Activated CD8-positive, alpha-beta memory T cell treated with anti-CD3 and anti-CD28 coated beads, Interleukin-2, amount 10 ng/mL, durations not matched to agents 7 days and 5 days (primary cell): ENCODE measurements at regions of chr19 and their contacts with region 1.

Region 1: DNA sequence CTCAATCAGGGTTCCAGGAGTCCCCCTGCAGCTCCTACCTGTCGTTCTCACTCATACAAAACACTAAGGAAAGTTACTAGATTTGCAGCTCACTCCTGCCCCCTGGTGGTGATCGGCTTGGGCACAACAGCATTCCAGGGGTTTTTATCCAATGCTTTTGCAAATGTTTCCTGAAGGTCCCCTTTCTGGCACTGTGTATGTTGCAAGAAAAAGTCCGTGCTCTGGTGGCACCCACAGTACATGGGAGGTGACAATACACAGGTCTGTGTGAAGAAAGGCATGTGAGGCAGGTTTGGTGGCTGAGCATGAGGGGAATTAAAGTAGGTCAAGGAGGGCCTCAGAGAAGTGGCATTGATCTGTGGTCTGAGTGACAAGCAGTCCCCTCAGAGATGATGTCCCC is 8.6 kb upstream of the TYK2 start:
- DNase-seq: peak; percentile 85
- ATAC-seq: peak; percentile 73
- H3K4me3 Mint-ChIP-seq: no peak overlapping the region
- H3K27ac Mint-ChIP-seq: peak overlapping the region; percentile 3
- H3K4me1 Mint-ChIP-seq: peaks cover 6% of the 10 kb centered on the region
- H3K27me3 Mint-ChIP-seq: no peaks in the 10 kb centered on the region

Region 2: DNA sequence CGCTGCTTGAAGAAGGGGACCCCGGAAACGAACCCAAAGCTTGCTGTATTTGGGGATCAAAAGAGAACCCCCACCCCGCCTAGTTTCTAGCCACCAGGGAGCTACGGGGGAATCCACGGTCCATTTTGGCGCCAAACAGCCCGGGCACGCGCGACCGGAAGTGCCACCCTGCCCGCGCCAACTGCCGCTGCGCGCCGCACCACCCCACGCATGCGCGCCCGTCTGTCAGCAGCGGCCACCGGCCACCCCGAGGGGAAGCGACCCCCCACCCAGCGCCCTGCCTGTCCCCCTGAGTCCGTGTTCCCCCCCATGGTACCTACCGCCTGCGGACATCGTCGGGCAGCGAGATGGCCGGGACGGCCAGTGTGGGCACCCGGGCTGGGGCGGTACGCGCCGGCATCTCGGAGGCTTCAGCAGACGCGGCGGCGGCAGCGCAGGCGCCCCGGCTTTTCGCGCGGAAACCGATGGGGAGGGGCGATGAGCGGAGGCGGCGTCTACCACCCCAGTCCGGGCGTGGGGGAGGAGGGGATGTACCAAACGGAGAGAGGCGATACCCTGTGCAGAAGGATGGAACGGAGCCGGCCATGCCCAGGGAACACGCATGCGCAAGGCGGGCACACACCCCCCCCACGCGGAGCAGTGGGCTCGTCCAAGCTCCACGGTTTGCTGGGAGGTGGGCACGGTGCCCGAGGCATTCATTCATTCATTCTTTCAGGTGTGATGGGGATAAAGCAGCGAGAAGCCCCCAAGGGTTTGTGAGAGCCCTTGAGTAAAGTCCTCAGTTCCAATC is 194.3 kb before region 1 on chr19 and contains the start of gene DNMT1:
- CTCF ChIA-PET with region 1: interaction called, 10 read pairs
- DNase-seq: peak; percentile 99
- ATAC-seq: peak; percentile 96
- H3K4me3 Mint-ChIP-seq: peak within 1 kb of the TSS; percentile 92
- H3K27ac Mint-ChIP-seq: peak within 1 kb of the TSS; percentile 94
- H3K4me1 Mint-ChIP-seq: peaks cover 51% of the 10 kb centered on the region
- H3K27me3 Mint-ChIP-seq: no peaks in the 10 kb centered on the region
- total RNA-seq, gene DNMT1: 433 to 500 TPM

Region 3: DNA sequence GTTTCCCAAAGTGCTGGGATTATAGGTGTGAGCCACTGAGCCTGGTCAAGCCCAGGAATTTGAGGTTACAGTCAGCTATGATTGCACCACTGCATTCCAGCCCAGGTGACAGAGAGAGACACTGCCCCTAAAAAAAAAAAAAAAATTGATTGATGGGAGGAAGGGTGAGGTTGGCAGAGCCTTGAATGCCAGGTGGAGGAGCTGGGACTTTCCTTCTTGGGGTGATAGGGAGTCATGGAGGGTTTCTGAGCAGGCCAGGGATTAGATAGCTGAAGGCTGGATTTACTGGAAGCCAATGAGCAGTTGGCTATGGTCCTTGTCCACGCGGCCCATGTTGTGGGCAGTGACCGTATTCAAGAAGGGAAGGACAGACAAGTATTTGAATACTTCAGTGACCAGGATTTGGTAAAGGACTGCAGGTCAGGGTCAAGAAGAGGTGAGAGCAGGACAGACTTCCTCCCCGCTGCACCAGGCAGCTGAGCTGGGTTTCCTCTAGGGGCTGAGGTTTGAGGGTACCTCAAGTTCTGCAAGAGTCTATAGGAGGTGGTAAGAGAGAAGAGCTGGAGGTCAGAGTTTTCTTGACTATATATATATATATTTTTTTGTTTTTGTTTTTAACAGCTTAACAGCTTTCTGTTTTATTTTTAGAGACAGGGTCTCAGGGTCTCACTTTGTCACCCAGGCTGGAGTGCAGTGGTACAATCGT is 109.1 kb before region 1 on chr19:
- CTCF ChIA-PET with region 1: interaction called, 19 read pairs
- DNase-seq: peak; percentile 60
- ATAC-seq: peak; percentile 75
- H3K4me3 Mint-ChIP-seq: peak overlapping the region; percentile 40
- H3K27ac Mint-ChIP-seq: peak overlapping the region; percentile 75
- H3K4me1 Mint-ChIP-seq: peaks cover 34% of the 10 kb centered on the region
- H3K27me3 Mint-ChIP-seq: no peaks in the 10 kb centered on the region

Region 4: GRCh38 chr19:10292206-10292788 is 96.7 kb before region 1 on chr19:
- CTCF ChIA-PET with region 1: interaction called, 15 read pairs
- DNase-seq: peak; percentile 87
- ATAC-seq: peak; percentile 67
- H3K4me3 Mint-ChIP-seq: peak overlapping the region; percentile 68
- H3K27ac Mint-ChIP-seq: peak overlapping the region; percentile 24
- H3K4me1 Mint-ChIP-seq: peaks cover 64% of the 10 kb centered on the region
- H3K27me3 Mint-ChIP-seq: peaks cover 81% of the 10 kb centered on the region

Region 5: DNA sequence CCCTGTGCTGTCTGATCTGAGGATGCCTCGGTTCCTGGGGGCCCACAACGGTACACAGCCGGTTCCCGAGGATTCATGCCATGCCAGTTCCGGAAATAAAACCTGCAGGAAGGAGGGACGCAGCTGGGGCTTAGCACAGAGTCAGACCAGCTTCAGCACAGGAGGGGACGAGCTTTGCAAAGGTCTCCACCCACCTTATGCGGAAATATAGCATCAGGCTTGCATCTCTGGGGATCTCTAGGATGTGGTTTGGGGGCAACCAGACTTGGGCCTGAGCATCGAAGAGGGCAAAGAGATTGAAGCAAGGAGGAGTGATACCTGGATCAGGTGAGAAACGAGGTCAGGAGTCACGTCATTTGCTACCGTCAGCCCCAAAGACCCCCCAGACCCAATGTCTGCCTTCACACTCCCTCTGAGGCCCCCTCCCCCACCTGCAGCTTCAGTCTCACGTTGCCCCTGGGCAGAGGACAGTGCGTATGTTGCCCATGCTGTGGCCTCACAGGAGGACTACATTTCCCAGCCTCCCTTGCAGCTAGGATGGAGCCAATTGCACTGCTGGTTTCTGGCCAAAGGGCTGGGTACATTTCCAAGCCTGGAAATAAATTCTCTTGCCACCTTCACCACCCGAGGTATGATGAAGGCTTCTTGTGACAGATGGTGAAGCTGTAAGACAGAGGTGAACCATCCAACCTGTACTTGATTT is 20.7 kb before region 1 on chr19:
- CTCF ChIA-PET with region 1: interaction called, 12 read pairs
- DNase-seq: no peak
- ATAC-seq: peak; percentile 39
- H3K4me3 Mint-ChIP-seq: no peak overlapping the region
- H3K27ac Mint-ChIP-seq: no peak overlapping the region
- H3K4me1 Mint-ChIP-seq: peaks cover 18% of the 10 kb centered on the region
- H3K27me3 Mint-ChIP-seq: no peaks in the 10 kb centered on the region

Region 6: GRCh38 chr19:10403137-10404021 is 14.4 kb after region 1 on chr19 and contains the start of gene CDC37:
- CTCF ChIA-PET with region 1: interaction called, 33 read pairs
- DNase-seq: peak; percentile 98
- ATAC-seq: peak; percentile 71
- H3K4me3 Mint-ChIP-seq: peak within 1 kb of the TSS; percentile 97
- H3K27ac Mint-ChIP-seq: peak within 1 kb of the TSS; percentile 93
- H3K4me1 Mint-ChIP-seq: peaks cover 60% of the 10 kb centered on the region
- H3K27me3 Mint-ChIP-seq: no peaks in the 10 kb centered on the region
- total RNA-seq, gene CDC37: 283 to 309 TPM

Region 7: DNA sequence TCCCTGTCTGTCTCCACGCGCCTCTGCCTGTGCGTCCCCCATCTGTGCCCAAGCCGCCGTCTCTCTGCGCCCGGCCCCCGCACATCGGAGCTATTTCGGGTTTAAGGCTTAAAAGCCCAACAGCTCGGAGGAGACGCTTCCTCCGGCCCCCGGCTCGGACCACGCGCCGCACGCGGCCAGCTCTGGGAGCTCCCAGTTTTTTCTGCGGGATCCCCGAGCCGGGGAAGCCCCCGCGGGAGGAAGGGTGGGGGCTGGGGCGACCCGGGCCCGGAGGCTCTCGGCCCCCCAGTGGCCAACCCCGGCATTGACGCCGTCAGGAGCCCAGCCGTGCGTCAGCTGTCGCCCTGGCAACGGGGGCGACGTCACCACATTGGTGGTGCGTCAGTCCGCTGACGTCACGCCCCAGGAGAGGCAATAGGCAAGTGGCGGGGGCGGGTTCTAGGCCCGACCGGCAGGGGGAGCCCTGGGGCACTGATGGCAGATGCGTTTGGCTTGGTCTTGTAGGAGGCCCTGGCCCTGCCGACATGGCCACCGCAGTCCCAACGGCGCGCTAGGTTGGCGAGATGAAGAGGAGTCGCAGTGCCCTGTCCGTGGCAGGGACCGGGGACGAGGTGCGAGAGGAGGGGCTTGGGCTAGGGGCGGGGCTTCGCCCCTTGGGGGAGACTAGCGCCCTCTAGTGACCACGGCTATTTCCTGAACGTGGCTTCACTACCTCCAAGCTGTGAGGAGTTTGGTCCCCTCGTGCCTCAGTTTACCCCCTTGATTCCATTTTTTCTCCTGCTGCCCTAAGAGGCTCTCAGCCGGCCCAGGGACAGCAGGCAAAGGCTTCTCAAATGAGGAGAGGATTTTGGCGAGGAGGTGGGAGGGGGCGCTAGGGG is 27.7 kb after region 1 on chr19:
- CTCF ChIA-PET with region 1: interaction called, 13 read pairs
- DNase-seq: peak; percentile 98
- ATAC-seq: peak; percentile 48
- H3K4me3 Mint-ChIP-seq: peak overlapping the region; percentile 76
- H3K27ac Mint-ChIP-seq: peak overlapping the region; percentile 95
- H3K4me1 Mint-ChIP-seq: peaks cover 61% of the 10 kb centered on the region
- H3K27me3 Mint-ChIP-seq: peaks cover 4% of the 10 kb centered on the region

Region 8: DNA sequence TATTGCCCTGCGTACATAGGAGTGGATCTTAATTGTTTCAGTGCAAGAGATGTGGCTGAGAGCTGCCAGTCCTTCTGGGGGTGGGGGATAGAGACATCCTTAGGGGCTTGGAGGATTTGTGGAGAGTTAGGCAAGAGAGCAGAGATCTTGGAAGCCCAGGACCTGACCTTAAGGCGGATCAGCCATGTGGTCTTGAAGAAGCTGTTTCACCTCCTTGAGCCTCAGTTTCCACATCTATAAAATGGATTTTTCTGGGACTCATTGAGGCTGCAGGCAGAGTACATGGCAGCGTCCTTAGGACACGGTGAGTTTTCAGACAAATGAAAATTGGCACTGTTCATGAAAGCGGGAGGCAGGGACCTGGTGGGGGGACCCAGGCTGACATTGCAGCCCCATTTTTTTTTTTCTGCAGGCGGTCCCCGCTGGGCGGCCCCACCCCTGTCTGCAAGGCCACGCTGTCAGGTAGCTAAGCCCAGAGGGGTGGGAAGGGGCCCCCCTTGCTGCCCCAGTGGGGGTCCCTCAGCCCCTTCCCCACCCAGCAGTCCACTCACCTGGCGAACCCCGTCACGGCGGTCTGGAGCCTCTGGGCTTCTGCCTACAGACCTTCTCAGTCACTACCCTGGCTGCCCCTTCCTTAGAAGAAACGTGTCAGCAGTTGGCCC is 61.4 kb after region 1 on chr19:
- CTCF ChIA-PET with region 1: no interaction called
- DNase-seq: no peak
- ATAC-seq: no peak
- H3K4me3 Mint-ChIP-seq: no peak overlapping the region
- H3K27ac Mint-ChIP-seq: no peak overlapping the region
- H3K4me1 Mint-ChIP-seq: peaks cover 25% of the 10 kb centered on the region
- H3K27me3 Mint-ChIP-seq: no peaks in the 10 kb centered on the region

Region 9: GRCh38 chr19:10553943-10554381 is 165.0 kb after region 1 on chr19:
- CTCF ChIA-PET with region 1: no interaction called
- DNase-seq: peak; percentile 96
- ATAC-seq: peak; percentile 87
- H3K4me3 Mint-ChIP-seq: peak overlapping the region; percentile 48
- H3K27ac Mint-ChIP-seq: peak overlapping the region; percentile 95
- H3K4me1 Mint-ChIP-seq: peaks cover 59% of the 10 kb centered on the region
- H3K27me3 Mint-ChIP-seq: no peaks in the 10 kb centered on the region